ENCODE measurements at regions of chr6 and their contacts with region 1.

Region 1: GRCh38 chr6:125790358-125791150 is at the start of gene NCOA7:
- DNase-seq: peak; percentile 68 to 91 (median 79)
- ATAC-seq: peak; percentile 74
- H3K4me3 ChIP-seq: peak within 1 kb of the TSS; percentile 83
- H3K4me3 Mint-ChIP-seq: peak within 1 kb of the TSS; percentile 94
- H3K27ac ChIP-seq: peak within 1 kb of the TSS; percentile 82 to 86
- H3K27ac Mint-ChIP-seq: peak within 1 kb of the TSS; percentile 99
- H3K4me1 ChIP-seq: peaks cover 25% of the 10 kb centered on the region
- H3K4me1 Mint-ChIP-seq: peaks cover 61% of the 10 kb centered on the region
- H3K27me3 ChIP-seq: no peaks in the 10 kb centered on the region
- H3K27me3 Mint-ChIP-seq: no peaks in the 10 kb centered on the region
- CTCF ChIP-seq: no peak
- total RNA-seq, gene NCOA7: 34.6 to 35.7 TPM

Region 2: GRCh38 chr6:125779924-125780539 is 10.5 kb before region 1 on chr6:
- CTCF ChIA-PET with region 1: interaction called, 72 read pairs
- POLR2A ChIA-PET with region 1: interaction called, 528 read pairs
- intact Hi-C with region 1: loop called (anchors 1 kb)
- DNase-seq: peak; percentile 72 to 96 (median 82)
- ATAC-seq: peak; percentile 76
- H3K4me3 ChIP-seq: peak overlapping the region; percentile 76
- H3K4me3 Mint-ChIP-seq: no peak overlapping the region
- H3K27ac ChIP-seq: peak overlapping the region; percentile 88 to 93
- H3K27ac Mint-ChIP-seq: no peak overlapping the region
- H3K4me1 ChIP-seq: peaks cover 3% of the 10 kb centered on the region
- H3K4me1 Mint-ChIP-seq: peaks cover 13% of the 10 kb centered on the region
- H3K27me3 ChIP-seq: no peaks in the 10 kb centered on the region
- H3K27me3 Mint-ChIP-seq: no peaks in the 10 kb centered on the region
- CTCF ChIP-seq: no peak

Region 3: GRCh38 chr6:125819535-125820326 is 29.2 kb after region 1 on chr6:
- CTCF ChIA-PET with region 1: interaction called, 10 read pairs
- POLR2A ChIA-PET with region 1: interaction called, 15 read pairs
- intact Hi-C with region 1: no loop called
- DNase-seq: no peak
- ATAC-seq: no peak
- H3K4me3 ChIP-seq: no peak overlapping the region
- H3K4me3 Mint-ChIP-seq: no peak overlapping the region
- H3K27ac ChIP-seq: no peak overlapping the region
- H3K27ac Mint-ChIP-seq: no peak overlapping the region
- H3K4me1 ChIP-seq: peaks cover 9% of the 10 kb centered on the region
- H3K4me1 Mint-ChIP-seq: peaks cover 57% of the 10 kb centered on the region
- H3K27me3 ChIP-seq: no peaks in the 10 kb centered on the region
- H3K27me3 Mint-ChIP-seq: no peaks in the 10 kb centered on the region
- CTCF ChIP-seq: no peak

Region 4: GRCh38 chr6:125858427-125859320 is 68.1 kb after region 1 on chr6:
- CTCF ChIA-PET with region 1: interaction called, 3 read pairs
- POLR2A ChIA-PET with region 1: interaction called, 13 read pairs
- intact Hi-C with region 1: no loop called
- DNase-seq: peak in 9 of 14 experiments; percentile 2 to 63 (median 5)
- ATAC-seq: no peak
- H3K4me3 ChIP-seq: no peak overlapping the region
- H3K4me3 Mint-ChIP-seq: no peak overlapping the region
- H3K27ac ChIP-seq: no peak overlapping the region
- H3K27ac Mint-ChIP-seq: no peak overlapping the region
- H3K4me1 ChIP-seq: no peaks in the 10 kb centered on the region
- H3K4me1 Mint-ChIP-seq: peaks cover 6% of the 10 kb centered on the region
- H3K27me3 ChIP-seq: no peaks in the 10 kb centered on the region
- H3K27me3 Mint-ChIP-seq: no peaks in the 10 kb centered on the region
- CTCF ChIP-seq: no peak

Region 5: GRCh38 chr6:125968493-125968892 is 177.9 kb after region 1 on chr6:
- CTCF ChIA-PET with region 1: interaction called, 3 read pairs
- POLR2A ChIA-PET with region 1: interaction called, 13 read pairs
- intact Hi-C with region 1: no loop called
- DNase-seq: no peak
- ATAC-seq: no peak
- H3K4me3 ChIP-seq: no peak overlapping the region
- H3K4me3 Mint-ChIP-seq: no peak overlapping the region
- H3K27ac ChIP-seq: no peak overlapping the region
- H3K27ac Mint-ChIP-seq: no peak overlapping the region
- H3K4me1 ChIP-seq: no peaks in the 10 kb centered on the region
- H3K4me1 Mint-ChIP-seq: peaks cover 51% of the 10 kb centered on the region
- H3K27me3 ChIP-seq: no peaks in the 10 kb centered on the region
- H3K27me3 Mint-ChIP-seq: no peaks in the 10 kb centered on the region
- CTCF ChIP-seq: no peak

Measured in CD4-positive, alpha-beta T cell (primary cell).